Motor neuron (in vitro differentiated cells): ENCODE measurements at regions of chr7 and their contacts with region 1.

Region 1: DNA sequence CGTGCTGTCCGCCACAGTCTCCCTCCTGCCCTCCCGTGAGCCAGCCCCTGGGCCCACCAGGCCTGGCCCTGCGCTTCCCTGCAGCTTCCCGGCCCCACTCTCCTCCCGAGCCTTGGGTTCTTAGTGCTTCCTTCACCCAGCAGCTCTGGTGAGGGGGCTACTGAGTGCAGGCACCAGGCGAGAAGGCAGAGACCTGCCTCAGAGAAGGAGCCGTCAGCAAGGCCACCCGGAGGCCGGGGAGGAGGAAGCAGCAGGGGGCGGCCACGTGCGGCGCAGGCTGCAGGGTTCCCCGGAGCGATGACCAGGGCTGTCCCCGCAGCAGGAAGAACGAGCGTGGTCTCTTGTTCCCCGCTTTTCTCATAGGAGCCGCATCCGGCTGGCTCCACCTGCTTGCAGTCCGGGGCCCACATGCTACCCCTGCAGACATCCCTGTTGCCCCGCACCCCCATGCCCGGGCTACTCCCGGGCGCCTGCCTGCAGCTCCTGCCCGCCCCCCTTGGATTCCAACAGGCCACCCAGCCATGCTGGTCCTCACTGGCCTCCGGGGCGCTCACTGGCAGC is 20.5 kb downstream of the YKT6 start:
- ATAC-seq: peak in 3 of 8 experiments; percentile 5 to 7 (median 6)
- H3K4me3 ChIP-seq: no peak overlapping the region
- H3K27ac ChIP-seq: no peak overlapping the region
- H3K4me1 ChIP-seq: peaks cover 11 to 26% of the 10 kb centered on the region in 2 donors

Region 2: GRCh38 chr7:44065436-44066118 is 155.7 kb before region 1 on chr7 and contains the start of gene PGAM2:
- in situ Hi-C with region 1: no loop called
- ATAC-seq: peak; percentile 10 to 75 (median 66)
- H3K4me3 ChIP-seq: peak within 1 kb of the TSS in 1 of 5 donors; percentile 9
- H3K27ac ChIP-seq: no peak within 1 kb of the TSS
- H3K4me1 ChIP-seq: peaks cover 21 to 22% of the 10 kb centered on the region in 2 donors
- total RNA-seq, gene PGAM2: 0.38 to 2.0 (median 0.99) TPM in 4 of 8 experiments, not detected in the others

Region 3: GRCh38 chr7:44477063-44477830 is 255.9 kb after region 1 on chr7:
- in situ Hi-C with region 1: loop called in 5 of 9 experiments (anchors 10 to 25 kb)
- ATAC-seq: peak; percentile 67 to 92 (median 74)
- H3K4me3 ChIP-seq: no peak overlapping the region
- H3K27ac ChIP-seq: no peak overlapping the region
- H3K4me1 ChIP-seq: peaks cover 0 to 4% of the 10 kb centered on the region in 2 donors